ENCODE measurements at regions of chr1 and their contacts with region 1.

Region 1: GRCh38 chr1:113677250-113678158 is 81.8 kb downstream of the PHTF1 start:
- DNase-seq: peak; percentile 75
- ATAC-seq: 0 out of 2 replicates have a peak, but pooled peaks have one; percentile 18
- H3K4me3 ChIP-seq: no peak overlapping the region
- H3K27ac ChIP-seq: no peak overlapping the region
- H3K4me1 ChIP-seq: peaks cover 38% of the 10 kb centered on the region
- H3K27me3 ChIP-seq: no peaks in the 10 kb centered on the region
- CTCF ChIP-seq: peak; percentile 85

Region 2: GRCh38 chr1:113140588-113141446 is 536.7 kb before region 1 on chr1:
- CTCF ChIA-PET with region 1: no interaction called
- POLR2A ChIA-PET with region 1: no interaction called
- intact Hi-C with region 1: loop called (anchors 1 kb)
- DNase-seq: peak; percentile 79
- ATAC-seq: peak; percentile 80
- H3K4me3 ChIP-seq: no peak overlapping the region
- H3K27ac ChIP-seq: peak overlapping the region; percentile 10
- H3K4me1 ChIP-seq: peaks cover 21% of the 10 kb centered on the region
- H3K27me3 ChIP-seq: no peaks in the 10 kb centered on the region
- CTCF ChIP-seq: peak; percentile 96

Region 3: GRCh38 chr1:113325039-113325438 is 352.5 kb before region 1 on chr1:
- CTCF ChIA-PET with region 1: no interaction called
- POLR2A ChIA-PET with region 1: no interaction called
- intact Hi-C with region 1: loop called (anchors 10 kb)
- DNase-seq: peak; percentile 67
- ATAC-seq: peak; percentile 48
- H3K4me3 ChIP-seq: no peak overlapping the region
- H3K27ac ChIP-seq: peak overlapping the region; percentile 47
- H3K4me1 ChIP-seq: peaks cover 44% of the 10 kb centered on the region
- H3K27me3 ChIP-seq: no peaks in the 10 kb centered on the region
- CTCF ChIP-seq: no peak

Region 4: GRCh38 chr1:113451710-113452109 is 225.8 kb before region 1 on chr1:
- CTCF ChIA-PET with region 1: no interaction called
- POLR2A ChIA-PET with region 1: no interaction called
- intact Hi-C with region 1: no loop called
- DNase-seq: no peak
- ATAC-seq: no peak
- H3K4me3 ChIP-seq: no peak overlapping the region
- H3K27ac ChIP-seq: no peak overlapping the region
- H3K4me1 ChIP-seq: peaks cover 17% of the 10 kb centered on the region
- H3K27me3 ChIP-seq: no peaks in the 10 kb centered on the region
- CTCF ChIP-seq: no peak

Region 5: GRCh38 chr1:113647164-113647563 is 30.3 kb before region 1 on chr1:
- CTCF ChIA-PET with region 1: no interaction called
- POLR2A ChIA-PET with region 1: no interaction called
- intact Hi-C with region 1: no loop called
- DNase-seq: no peak
- ATAC-seq: no peak
- H3K4me3 ChIP-seq: no peak overlapping the region
- H3K27ac ChIP-seq: no peak overlapping the region
- H3K4me1 ChIP-seq: no peaks in the 10 kb centered on the region
- H3K27me3 ChIP-seq: no peaks in the 10 kb centered on the region
- CTCF ChIP-seq: no peak

Region 6: DNA sequence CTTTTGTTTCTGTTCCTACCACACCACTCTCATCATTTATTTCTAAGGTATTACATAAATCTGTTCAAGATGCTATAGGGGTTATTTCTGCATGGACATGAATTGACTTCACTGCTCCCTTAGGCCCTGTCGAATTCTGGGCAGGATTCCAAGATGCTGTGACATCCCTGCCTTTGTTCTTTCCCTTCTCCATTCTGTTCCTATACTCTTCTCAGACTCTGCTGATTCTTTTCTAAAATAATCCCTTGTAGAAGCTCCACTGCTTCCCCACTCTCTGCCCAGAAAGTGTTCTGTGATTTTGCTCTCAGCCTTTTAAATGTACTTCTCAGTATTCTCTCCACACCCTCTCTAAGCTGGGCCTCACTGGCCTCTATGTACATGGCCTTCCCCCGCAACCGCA is 17.4 kb before region 1 on chr1:
- CTCF ChIA-PET with region 1: no interaction called
- POLR2A ChIA-PET with region 1: no interaction called
- intact Hi-C with region 1: loop called (anchors 1 kb)
- DNase-seq: no peak
- ATAC-seq: no peak
- H3K4me3 ChIP-seq: no peak overlapping the region
- H3K27ac ChIP-seq: no peak overlapping the region
- H3K4me1 ChIP-seq: peaks cover 42% of the 10 kb centered on the region
- H3K27me3 ChIP-seq: no peaks in the 10 kb centered on the region
- CTCF ChIP-seq: no peak

Region 7: DNA sequence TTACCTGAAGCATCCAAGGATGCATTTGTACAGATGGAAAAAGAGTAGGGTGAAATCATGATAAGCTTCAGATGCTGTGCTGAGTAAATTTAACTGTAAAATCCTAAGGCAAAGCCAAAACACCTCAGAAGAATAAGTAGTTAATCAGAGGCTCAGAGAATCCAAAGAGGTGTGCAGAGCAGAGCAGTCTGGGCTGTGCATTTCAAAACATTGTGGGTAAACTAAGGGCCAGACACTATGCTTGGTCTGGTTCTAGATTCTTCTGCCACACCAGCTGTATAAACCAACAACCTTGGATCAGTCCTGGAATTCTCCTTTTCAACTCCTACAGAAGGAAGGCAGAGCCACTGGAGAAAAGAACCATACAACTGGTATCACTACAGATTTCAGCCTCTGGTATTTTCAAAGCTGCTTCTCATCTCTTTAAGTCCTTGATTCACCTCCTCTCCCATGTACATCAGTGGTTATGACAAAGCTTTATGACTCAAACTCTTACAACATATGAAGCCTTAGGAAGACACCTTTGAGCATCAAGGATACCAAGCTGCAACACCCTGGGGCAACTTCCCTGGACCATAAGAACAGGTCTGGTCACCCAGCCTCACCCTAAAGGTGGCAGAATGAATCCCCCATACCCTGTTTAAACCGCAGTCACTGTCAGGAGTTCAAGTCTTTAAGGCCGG is 240.0 kb after region 1 on chr1:
- CTCF ChIA-PET with region 1: no interaction called
- POLR2A ChIA-PET with region 1: no interaction called
- intact Hi-C with region 1: no loop called
- DNase-seq: peak; percentile 74
- ATAC-seq: no peak; the same call in 1 of the 2 replicates
- H3K4me3 ChIP-seq: no peak overlapping the region
- H3K27ac ChIP-seq: no peak overlapping the region
- H3K4me1 ChIP-seq: peaks cover 14% of the 10 kb centered on the region; the same call in 1 of the 2 replicates
- H3K27me3 ChIP-seq: no peaks in the 10 kb centered on the region
- CTCF ChIP-seq: no peak